ENCODE measurements at regions of chrX and their contacts with region 1.

Region 1: DNA sequence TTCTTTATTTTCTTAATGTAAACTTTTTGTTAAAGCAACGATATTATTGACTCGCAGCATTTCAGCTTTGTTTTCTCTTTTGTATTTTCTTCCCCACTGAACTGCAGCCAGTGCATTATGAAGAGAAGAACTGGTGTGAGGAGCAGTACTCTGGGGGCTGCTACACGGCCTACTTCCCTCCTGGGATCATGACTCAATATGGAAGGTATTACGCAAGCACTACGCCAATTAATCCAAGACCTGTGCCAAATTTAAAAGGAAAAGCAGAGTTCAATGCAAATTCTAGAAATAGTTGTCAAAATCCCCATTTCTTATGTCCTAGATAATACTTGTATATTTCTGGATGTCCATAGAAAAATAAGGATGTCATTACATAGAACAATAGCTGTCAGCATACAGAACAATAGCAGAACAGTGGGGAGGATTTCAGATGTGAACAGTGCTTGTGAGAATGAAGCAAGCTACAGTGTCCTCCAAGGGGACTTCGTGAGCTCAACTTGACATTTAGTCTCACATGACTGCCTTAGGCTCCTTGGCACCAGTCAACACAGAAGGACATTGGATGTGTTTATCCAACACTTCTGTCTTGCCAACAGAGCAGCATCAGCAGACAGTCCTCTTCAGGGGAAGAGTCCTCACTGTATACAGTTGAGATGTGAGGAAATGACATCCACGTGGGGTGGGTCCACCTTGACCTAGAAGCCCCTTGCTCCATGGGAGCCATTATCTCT is 85.9 kb downstream of the MAOA start:
- DNase-seq: no peak

Region 2: GRCh38 chrX:43654431-43655150 is 87.4 kb before region 1 on chrX:
- intact Hi-C with region 1: loop called in 1 of 2 experiments (anchors 10 kb)
- DNase-seq: peak; percentile 97

Measured in posterior vena cava (tissue), 2 donors.